Right cardiac atrium (tissue), 5 donors: ENCODE measurements at regions of chr17 and their contacts with region 1.

Region 1: DNA sequence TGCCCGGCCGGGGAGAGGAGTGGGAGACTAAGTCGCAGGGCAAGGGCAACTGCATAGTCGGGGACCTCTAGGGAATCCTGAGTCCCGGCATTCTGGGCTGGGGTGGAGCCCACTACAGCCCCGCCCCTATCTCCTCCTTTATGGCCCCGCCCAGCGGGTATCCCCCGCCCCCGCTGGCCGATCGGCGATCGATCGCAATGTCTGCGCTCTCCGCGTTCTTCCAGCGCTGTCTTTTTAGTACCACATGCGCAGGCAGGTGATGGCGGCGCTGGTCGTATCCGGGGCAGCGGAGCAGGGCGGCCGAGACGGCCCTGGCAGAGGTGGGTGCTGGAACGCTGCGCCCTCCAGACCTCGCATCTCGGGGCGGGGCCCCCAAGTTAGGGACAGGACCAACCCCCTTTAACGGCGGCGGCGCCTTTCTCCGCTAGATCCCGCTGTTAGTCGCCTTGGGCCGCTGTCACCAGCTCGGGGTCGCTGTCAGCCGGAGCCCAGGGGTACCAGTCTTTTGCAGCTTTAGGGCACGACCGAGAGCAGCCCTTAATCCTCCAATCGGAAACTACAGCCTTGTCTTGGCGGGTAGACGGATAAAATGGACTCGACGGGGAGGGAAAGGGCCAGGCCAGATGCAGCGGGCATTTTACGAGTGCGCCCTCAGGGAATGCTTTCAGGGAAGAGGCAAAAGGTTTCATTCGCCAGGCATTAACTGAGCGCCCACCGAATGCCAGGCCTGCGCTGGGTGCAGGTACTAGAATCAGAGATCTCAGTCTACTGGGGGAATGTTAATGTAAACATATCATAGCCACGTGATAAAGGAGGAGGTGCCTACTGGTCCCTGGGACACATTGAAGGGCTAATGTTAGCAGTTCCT is at the start of gene DPH1:
- DNase-seq: peak; percentile 91 to 96 (median 96)
- ATAC-seq: peak; percentile 87 to 90
- H3K4me3 ChIP-seq: peak within 1 kb of the TSS; percentile 67
- H3K27ac ChIP-seq: peak within 1 kb of the TSS; percentile 17
- H3K4me1 ChIP-seq: peaks cover 2% of the 10 kb centered on the region
- H3K27me3 ChIP-seq: no peaks in the 10 kb centered on the region
- total RNA-seq, gene DPH1: 24.7 to 30.7 (median 27.5) TPM

Region 2: DNA sequence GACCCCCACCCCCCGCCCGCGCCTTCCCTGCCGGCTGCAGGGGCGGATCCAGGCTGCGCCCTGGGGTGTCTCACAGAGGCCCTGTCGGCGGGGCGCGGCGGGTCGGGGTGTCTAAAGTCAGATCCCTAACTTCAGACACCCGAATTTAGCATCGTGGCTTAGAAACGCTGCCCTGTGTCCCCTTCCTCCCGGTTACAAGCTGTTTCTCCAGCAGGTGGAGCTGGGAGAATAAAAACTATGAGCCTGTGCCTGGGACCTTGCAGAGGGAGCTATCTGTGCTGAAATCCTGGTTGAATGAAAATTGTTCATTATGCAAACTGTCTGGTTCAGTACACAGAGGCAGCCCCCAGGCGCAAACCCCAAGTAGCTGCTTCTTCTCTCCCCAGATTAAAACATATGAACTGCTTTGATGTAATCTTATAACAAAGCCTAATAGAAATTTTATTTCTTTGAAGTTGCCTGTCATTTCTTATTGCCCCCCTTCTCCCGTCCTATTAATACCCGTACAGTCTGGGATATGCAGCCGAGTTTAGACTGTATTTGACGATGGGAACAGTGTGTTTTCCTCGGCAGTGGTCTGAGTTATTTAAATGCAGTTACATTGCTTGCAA is 121.3 kb before region 1 on chr17:
- intact Hi-C with region 1: loop called (anchors 2 kb)
- DNase-seq: peak; percentile 52 to 79 (median 65)
- ATAC-seq: peak; percentile 81 to 85
- H3K4me3 ChIP-seq: peak overlapping the region; percentile 33
- H3K27ac ChIP-seq: no peak overlapping the region
- H3K4me1 ChIP-seq: peaks cover 5% of the 10 kb centered on the region
- H3K27me3 ChIP-seq: no peaks in the 10 kb centered on the region

Region 3: DNA sequence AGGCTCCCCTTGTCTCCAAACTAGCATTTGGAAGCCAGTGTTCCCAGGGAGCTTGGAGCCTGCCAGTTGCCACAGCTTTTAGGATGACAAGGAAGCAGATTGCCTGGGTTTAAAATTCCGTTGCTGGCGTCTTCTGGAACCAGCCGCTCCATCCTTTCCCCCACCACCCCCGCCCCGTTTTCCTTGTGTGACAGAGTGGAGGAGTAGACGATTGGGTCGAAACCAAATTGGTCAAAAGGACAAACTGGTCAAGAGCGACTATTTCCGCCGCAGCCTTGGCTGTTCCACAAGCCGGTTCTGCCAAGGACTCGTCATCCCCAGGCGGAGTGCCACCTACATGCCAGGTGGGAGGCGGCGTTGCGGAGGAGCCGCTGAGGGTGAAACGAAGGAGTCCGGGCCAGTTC is 109.2 kb before region 1 on chr17:
- intact Hi-C with region 1: no loop called
- DNase-seq: peak in 1 of 3 donors; percentile 35
- ATAC-seq: no peak
- H3K4me3 ChIP-seq: no peak overlapping the region
- H3K27ac ChIP-seq: no peak overlapping the region
- H3K4me1 ChIP-seq: no peaks in the 10 kb centered on the region
- H3K27me3 ChIP-seq: no peaks in the 10 kb centered on the region

Region 4: DNA sequence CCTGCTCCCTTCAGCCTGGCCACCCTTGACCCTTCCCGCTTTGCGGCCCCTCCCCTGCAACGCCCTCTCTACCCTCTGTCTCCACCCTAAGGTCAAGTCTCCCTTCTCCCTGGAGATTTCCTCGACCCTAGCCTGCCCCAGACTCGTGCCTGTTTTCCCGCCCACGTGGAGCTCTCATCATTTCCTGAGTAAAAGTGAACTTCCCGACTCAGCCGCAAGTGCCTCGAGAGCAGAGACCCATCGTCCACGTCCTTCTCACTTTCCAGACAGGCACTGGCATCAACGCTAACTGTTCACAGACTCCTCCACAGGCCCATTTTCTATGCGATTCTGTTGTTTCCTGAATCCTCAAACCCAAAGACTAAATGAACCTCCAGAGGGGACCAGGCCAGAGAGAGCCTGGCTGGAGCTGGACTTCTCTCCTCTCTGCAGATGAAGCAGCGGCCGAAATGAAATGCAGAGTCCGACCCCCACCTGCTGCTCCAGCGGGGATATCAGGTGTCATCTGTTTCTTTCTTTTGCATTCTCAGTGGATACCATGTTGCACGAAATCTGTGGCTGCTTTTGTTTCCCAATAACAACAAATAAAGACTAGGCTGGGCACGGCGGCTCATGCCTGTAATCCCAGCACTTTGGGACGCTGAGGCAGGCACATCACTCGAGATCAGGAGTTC is 57.5 kb before region 1 on chr17:
- intact Hi-C with region 1: loop called in 1 of 4 experiments (anchors 10 kb)
- DNase-seq: peak in 2 of 3 donors; percentile 30 to 66
- ATAC-seq: peak in 1 of 2 donors; percentile 75
- H3K4me3 ChIP-seq: no peak overlapping the region
- H3K27ac ChIP-seq: no peak overlapping the region
- H3K4me1 ChIP-seq: no peaks in the 10 kb centered on the region
- H3K27me3 ChIP-seq: no peaks in the 10 kb centered on the region